PC-9 (cell line): ENCODE measurements at regions of chr9 and their contacts with region 1.

Region 1: DNA sequence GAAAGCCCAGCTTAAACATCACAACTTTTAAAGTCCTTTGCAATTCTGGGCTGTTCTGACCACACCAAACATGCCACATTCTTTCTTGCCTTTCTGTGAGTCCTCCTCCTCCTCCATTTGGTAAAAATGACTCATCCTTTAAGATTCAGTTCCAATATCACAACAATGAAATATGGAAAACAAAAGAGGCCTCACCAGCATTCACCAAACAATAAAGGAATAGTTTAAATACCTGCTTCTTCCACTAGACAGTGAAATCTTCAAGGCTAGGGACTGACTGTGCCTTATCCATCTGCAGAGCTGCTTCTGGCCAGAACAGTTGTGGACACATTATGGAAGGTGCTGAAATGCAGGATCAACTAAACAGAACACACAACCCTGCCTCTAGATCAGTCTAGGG is 36.0 kb downstream of the NR6A1 start:
- DNase-seq: peak; percentile 45 to 89
- H3K4me3 ChIP-seq: no peak overlapping the region
- H3K27ac ChIP-seq: peak overlapping the region; percentile 80
- H3K4me1 ChIP-seq: peaks cover 34% of the 10 kb centered on the region
- H3K27me3 ChIP-seq: no peaks in the 10 kb centered on the region
- CTCF ChIP-seq: no peak

Region 2: DNA sequence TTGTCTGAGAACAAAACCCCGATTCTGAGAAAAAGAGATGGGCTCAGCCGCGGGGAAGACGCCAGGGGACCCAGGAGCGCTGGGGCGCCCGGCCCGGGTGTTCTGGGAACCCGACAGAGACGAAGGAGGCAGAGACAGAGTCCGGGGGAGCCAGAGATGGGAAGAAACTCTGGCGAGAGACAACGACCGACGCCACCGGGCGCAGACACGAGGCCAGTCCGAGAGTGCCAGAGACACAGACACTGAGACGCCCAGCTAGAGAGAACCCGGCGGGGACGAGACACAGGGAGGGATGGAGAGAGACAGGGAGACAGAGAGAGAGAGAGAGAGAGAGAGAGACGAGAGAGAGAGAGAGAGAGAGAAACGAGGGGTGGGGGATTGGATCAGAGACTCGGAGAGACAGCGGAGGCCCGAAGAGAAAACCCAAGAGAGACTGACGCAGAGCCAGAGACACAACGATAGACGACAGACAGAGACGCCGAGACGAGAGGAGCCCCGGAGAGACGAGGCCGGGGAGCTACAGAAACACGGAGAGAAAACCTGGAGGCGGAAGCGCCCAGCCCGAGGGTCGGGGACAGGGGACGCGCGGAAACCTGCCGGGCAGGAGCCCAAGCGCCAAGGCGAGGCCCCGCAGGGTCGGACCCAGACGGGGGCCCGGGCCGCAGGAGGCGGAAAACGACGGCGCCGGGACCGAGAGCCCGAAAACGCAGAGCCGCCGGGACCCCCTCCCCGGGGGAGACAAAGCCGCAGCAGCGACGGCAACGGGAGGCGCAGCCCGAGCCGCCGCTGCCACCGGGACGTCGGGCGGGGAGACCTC is 231.2 kb before region 1 on chr9:
- CTCF ChIA-PET with region 1: no interaction called
- POLR2A ChIA-PET with region 1: interaction called, 10 read pairs
- intact Hi-C with region 1: no loop called
- DNase-seq: no peak
- H3K4me3 ChIP-seq: no peak overlapping the region
- H3K27ac ChIP-seq: no peak overlapping the region
- H3K4me1 ChIP-seq: no peaks in the 10 kb centered on the region
- H3K27me3 ChIP-seq: peaks cover 17% of the 10 kb centered on the region; the same call in 1 of the 2 replicates
- CTCF ChIP-seq: no peak

Region 3: GRCh38 chr9:124537926-124538325 is 197.2 kb before region 1 on chr9:
- CTCF ChIA-PET with region 1: no interaction called
- POLR2A ChIA-PET with region 1: no interaction called
- intact Hi-C with region 1: no loop called
- DNase-seq: no peak
- H3K4me3 ChIP-seq: no peak overlapping the region
- H3K27ac ChIP-seq: no peak overlapping the region
- H3K4me1 ChIP-seq: no peaks in the 10 kb centered on the region
- H3K27me3 ChIP-seq: no peaks in the 10 kb centered on the region
- CTCF ChIP-seq: no peak

Region 4: GRCh38 chr9:124754289-124754688 is 19.2 kb after region 1 on chr9:
- CTCF ChIA-PET with region 1: no interaction called
- POLR2A ChIA-PET with region 1: interaction called, 7 read pairs
- intact Hi-C with region 1: loop called (anchors 2 kb)
- DNase-seq: no peak
- H3K4me3 ChIP-seq: no peak overlapping the region
- H3K27ac ChIP-seq: no peak overlapping the region
- H3K4me1 ChIP-seq: peaks cover 27% of the 10 kb centered on the region
- H3K27me3 ChIP-seq: no peaks in the 10 kb centered on the region
- CTCF ChIP-seq: peak; percentile 33; the same call in 1 of the 2 replicates

Region 5: GRCh38 chr9:124894741-124895170 is 159.6 kb after region 1 on chr9:
- CTCF ChIA-PET with region 1: no interaction called
- POLR2A ChIA-PET with region 1: no interaction called
- intact Hi-C with region 1: no loop called
- DNase-seq: peak in 1 of 2 experiments; percentile 21
- H3K4me3 ChIP-seq: no peak overlapping the region
- H3K27ac ChIP-seq: no peak overlapping the region
- H3K4me1 ChIP-seq: no peaks in the 10 kb centered on the region
- H3K27me3 ChIP-seq: no peaks in the 10 kb centered on the region
- CTCF ChIP-seq: peak; percentile 54; the same call in 1 of the 2 replicates